Adrenal gland (tissue), 19 donors: ENCODE measurements at regions of chr11 and their contacts with region 1.

Region 1: DNA sequence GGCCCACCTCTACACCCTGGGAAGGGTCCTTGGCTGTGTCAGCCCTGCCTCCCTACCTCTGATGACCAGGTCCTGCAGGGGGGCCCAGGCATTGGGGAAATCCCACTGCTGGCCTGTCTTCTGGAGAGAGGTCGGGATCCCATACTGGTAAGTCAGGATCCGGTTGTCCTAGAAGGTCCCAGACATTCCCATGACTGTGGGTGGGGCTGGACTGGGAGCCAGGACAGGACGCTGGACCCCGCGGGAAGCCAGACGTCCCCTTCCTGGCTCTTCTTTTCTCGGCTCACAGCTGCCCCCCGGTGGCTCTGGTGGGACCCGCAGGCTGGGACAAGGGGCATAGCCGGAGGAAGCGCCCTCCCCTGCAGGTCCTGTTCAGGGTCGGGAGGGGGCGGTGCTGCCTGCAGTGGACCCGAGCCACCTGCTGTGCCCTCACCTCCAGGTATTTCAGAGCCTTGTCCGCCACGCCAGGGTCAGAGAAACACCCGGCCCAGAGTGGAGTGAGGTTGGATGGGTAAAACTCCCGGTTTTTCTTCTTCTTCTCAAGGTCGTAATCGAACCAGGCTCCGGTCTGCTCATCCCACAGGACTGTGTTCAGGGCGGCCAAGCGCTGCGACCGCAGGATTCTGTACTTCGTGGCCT is 20.0 kb downstream of the TREH start:
- DNase-seq: peak; percentile 89 to 95 (median 90)
- H3K4me3 ChIP-seq: no peak overlapping the region
- H3K27ac ChIP-seq: peak overlapping the region in 2 of 5 donors; percentile 56 to 78
- H3K4me1 ChIP-seq: peaks cover 0 to 4% of the 10 kb centered on the region in 2 donors
- H3K27me3 ChIP-seq: no peaks in the 10 kb centered on the region
- CTCF ChIP-seq: peak; percentile 89 to 97 (median 92)
- POLR2A ChIP-seq: no peak

Region 2: DNA sequence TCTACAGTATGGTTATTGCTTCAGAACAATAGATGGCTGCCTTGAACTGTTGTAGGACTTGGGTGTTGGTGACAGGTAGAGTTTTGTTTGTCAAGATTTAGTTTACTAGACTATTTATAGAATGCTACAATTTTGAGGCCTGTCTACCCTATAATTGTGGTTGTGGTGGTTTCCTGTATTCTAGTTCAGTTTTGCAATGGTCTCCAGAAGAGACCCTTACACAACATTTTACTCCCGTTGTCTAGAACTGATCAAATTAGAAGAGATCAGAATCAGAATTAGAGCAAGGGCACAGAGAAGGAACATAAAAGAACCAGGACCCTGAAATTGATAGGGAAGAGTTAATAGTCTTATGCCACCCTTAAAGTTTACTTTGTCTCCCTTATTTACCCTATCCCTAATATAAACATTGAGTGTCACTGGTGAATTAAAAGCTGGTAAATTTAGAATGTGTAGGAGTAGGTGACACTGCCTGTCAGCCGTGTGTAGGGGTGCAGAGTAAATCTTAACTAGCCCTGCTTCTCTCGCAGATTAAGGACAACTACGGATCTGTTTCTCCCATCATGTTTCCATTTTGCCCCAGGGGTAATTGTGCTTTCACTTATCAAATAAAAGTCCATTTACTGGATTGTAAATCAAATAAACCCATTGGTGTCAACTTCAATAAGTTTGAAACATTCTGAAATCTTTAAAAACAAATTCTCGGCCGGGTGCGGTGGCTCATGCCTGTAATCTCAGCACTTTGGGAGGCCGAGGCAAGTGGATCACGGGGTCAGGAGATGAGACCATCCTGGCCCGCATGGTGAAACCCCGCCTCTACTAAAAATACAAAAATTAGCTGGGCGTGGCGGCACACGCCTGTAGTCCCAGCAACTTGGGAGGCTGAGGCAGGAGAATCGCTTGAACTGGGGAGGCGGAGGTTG is 62.9 kb before region 1 on chr11:
- intact Hi-C with region 1: loop called in 1 of 2 experiments (anchors 5 kb)
- DNase-seq: peak in 1 of 7 donors; percentile 62
- H3K4me3 ChIP-seq: no peak overlapping the region
- H3K27ac ChIP-seq: peak overlapping the region in 1 of 5 donors; percentile 24
- H3K4me1 ChIP-seq: peaks cover 0 to 3% of the 10 kb centered on the region in 2 donors
- H3K27me3 ChIP-seq: no peaks in the 10 kb centered on the region
- CTCF ChIP-seq: no peak
- POLR2A ChIP-seq: no peak